MCF 10A (cell line): ENCODE measurements at regions of chr5 and their contacts with region 1.

Region 1: DNA sequence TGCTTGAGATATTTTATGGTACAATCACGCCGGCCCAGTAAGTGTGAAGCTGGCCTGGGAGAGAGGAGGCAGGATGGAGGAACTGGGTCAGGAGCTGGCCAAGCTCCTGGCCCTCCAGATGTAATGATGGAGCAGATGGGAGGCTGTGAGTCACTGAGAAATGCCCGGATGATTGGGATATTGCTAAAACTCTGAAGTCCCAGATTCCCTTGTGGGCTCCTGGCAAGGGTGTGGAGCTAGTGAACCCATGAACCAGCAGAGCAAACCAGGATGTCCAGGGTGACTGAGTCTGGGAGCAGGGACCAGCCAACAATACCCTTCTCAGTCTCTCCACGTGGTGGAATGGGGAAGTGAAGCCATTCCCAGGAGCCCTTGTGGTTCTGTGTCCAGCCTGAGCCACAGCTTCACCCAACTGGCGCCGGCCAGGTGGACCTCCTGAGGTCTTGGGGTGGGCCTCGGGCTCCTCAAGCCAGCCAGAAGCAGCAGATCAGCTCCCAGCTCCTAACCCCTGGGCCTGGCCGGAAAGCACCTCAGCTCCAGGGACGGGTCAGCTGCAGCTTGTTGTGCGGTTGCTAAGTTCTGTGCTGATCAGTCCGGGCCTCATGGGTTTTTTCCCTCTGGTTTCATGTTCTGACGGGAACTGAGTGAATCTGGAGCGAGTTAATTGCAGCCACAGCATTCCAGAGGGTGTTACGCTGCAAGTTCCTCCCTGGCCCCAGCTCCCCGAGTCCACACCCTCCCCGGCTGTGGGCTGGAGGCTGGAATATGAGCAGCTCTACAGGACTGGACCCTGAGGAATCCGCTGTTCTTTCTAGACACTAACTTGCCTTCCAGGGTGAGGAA is 37.6 kb downstream of the DUSP1 start:
- DNase-seq: peak; percentile 93
- H3K4me3 Mint-ChIP-seq: peak overlapping the region; percentile 63
- H3K27ac Mint-ChIP-seq: peak overlapping the region; percentile 99
- H3K4me1 Mint-ChIP-seq: peaks cover 44% of the 10 kb centered on the region
- H3K27me3 Mint-ChIP-seq: no peaks in the 10 kb centered on the region
- CTCF ChIP-seq: peak; percentile 18

Region 2: DNA sequence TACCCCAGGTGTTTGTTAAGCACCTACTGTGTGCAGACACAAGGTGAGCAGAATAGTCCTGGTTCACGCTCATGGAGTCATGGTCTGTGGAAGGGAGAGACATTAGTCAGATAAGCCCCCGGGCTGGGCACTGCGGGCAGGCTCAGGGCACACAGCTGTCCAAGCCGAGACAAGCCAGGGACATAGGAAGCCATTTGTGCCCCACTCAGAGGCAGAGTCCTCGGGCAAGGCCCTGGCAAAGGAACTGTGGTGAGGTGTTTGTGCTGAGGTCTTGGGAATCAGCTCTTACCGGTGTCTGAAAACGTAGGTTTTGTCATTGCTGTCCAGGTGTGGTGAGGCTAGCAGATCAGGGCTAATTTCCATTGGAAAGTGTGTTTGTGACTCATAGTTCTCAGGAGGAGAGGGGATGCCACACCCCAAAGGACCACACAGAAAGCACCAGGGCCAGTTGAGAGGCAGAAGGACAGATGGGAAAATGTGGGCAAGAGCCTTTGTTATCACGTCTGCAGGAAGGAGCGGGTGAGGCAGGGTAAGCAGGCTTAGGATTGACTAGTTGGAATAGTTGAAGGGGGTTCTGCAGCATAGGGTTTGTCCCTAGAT is 138.4 kb before region 1 on chr5:
- CTCF ChIA-PET with region 1: no interaction called
- POLR2A ChIA-PET with region 1: no interaction called
- intact Hi-C with region 1: no loop called
- DNase-seq: peak; percentile 78
- H3K4me3 Mint-ChIP-seq: no peak overlapping the region
- H3K27ac Mint-ChIP-seq: no peak overlapping the region
- H3K4me1 Mint-ChIP-seq: peaks cover 16% of the 10 kb centered on the region
- H3K27me3 Mint-ChIP-seq: peaks cover 12% of the 10 kb centered on the region
- CTCF ChIP-seq: no peak

Region 3: GRCh38 chr5:172616730-172617129 is 116.6 kb before region 1 on chr5:
- CTCF ChIA-PET with region 1: no interaction called
- POLR2A ChIA-PET with region 1: no interaction called
- intact Hi-C with region 1: no loop called
- DNase-seq: no peak
- H3K4me3 Mint-ChIP-seq: no peak overlapping the region
- H3K27ac Mint-ChIP-seq: no peak overlapping the region
- H3K4me1 Mint-ChIP-seq: peaks cover under 1% of the 10 kb centered on the region
- H3K27me3 Mint-ChIP-seq: no peaks in the 10 kb centered on the region
- CTCF ChIP-seq: no peak

Region 4: GRCh38 chr5:172658961-172659491 is 74.3 kb before region 1 on chr5:
- CTCF ChIA-PET with region 1: no interaction called
- POLR2A ChIA-PET with region 1: no interaction called
- intact Hi-C with region 1: no loop called
- DNase-seq: peak; percentile 30
- H3K4me3 Mint-ChIP-seq: no peak overlapping the region
- H3K27ac Mint-ChIP-seq: peak overlapping the region; percentile 40
- H3K4me1 Mint-ChIP-seq: peaks cover 15% of the 10 kb centered on the region
- H3K27me3 Mint-ChIP-seq: no peaks in the 10 kb centered on the region
- CTCF ChIP-seq: no peak

Region 5: DNA sequence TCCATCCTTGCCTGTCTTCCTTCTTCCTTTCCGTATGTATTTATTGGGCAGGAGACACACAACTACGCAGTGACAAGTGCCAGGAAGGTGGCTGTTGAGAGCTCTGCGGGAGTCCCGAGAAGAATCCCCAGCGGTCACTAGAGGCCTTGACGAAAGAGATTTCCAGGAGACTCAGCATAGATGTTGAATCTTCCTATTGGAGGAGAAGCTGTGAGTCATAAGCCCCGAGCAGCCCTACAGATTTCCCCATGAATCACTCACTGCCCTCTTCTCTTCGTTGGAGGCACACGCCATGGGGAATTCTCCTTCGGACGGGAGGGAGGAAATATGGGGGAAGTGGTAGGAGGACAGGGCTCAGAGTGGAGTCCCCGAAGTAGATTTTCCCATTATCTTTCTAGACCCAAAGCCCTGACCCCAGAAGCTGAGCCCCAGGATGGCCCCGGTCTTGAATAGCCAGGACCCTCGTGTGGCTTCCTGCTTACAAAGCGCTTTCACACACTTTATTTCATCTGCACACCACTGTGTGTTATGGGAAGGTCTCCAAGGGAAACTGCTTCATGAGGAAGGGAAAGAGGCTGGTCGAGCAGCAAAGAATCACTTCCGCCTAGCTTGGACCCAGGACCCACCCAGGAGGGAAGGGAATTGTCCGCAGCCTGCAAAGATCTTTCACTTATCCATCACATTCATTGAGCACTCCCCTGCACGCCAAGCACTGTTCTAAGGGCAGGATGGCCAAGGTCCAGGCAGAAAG is 24.9 kb after region 1 on chr5:
- CTCF ChIA-PET with region 1: interaction called, 8 read pairs
- POLR2A ChIA-PET with region 1: interaction called, 44 read pairs
- intact Hi-C with region 1: no loop called
- DNase-seq: peak; percentile 98
- H3K4me3 Mint-ChIP-seq: no peak overlapping the region
- H3K27ac Mint-ChIP-seq: peak overlapping the region; percentile 76
- H3K4me1 Mint-ChIP-seq: peaks cover 12% of the 10 kb centered on the region
- H3K27me3 Mint-ChIP-seq: no peaks in the 10 kb centered on the region
- CTCF ChIP-seq: no peak

Region 6: DNA sequence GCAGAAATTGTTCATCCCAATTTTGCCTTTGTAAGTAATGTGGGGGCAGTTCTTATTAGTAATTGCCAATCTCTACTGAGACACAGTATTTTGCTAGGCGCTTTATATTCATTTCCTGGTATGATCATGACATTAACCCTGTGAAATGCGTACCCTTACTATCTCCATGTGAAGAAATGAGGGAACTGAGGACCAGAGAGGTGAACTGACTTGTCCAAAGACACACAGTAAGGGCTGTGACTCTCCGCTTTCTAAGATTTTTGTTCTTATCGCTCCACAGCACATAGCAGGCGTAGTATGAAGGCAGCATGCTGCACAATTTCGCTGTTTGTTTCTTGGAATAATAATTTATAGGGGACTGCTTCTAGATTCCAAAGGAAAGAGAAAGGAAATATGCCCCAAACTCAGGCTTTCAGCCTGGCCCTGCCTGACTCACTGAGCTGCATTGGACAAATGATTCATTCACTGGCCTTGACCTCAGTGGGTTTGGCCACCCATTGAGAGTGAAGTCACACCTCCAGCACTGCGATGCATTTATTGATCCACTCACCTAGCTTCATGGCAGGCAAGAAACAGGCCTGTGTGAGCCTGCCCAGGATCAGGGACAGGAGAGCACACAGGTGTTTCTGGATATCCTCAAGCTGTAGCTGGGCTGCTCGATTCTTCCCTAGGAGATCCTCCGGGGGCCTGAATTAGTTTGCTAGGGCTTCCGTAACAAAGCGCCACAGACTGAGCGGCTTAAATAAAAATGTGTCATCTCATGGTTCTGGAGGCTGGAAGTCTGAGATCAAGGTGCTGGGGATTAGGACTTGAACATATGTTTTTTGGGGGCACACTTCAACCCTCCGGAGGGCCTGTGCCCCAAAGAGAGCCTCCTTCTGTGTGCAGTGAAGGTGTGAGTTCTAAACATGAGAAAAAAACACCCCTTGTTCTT is 44.8 kb after region 1 on chr5:
- CTCF ChIA-PET with region 1: interaction called, 26 read pairs
- POLR2A ChIA-PET with region 1: interaction called, 287 read pairs
- intact Hi-C with region 1: no loop called
- DNase-seq: peak; percentile 97
- H3K4me3 Mint-ChIP-seq: peak overlapping the region; percentile 69
- H3K27ac Mint-ChIP-seq: peak overlapping the region; percentile 99
- H3K4me1 Mint-ChIP-seq: peaks cover 70% of the 10 kb centered on the region
- H3K27me3 Mint-ChIP-seq: no peaks in the 10 kb centered on the region
- CTCF ChIP-seq: no peak

Region 7: GRCh38 chr5:172910828-172911627 is 177.7 kb after region 1 on chr5:
- CTCF ChIA-PET with region 1: interaction called, 7 read pairs
- POLR2A ChIA-PET with region 1: interaction called, 42 read pairs
- intact Hi-C with region 1: no loop called
- DNase-seq: peak; percentile 99
- H3K4me3 Mint-ChIP-seq: no peak overlapping the region
- H3K27ac Mint-ChIP-seq: peak overlapping the region; percentile 90
- H3K4me1 Mint-ChIP-seq: peaks cover 43% of the 10 kb centered on the region
- H3K27me3 Mint-ChIP-seq: no peaks in the 10 kb centered on the region
- CTCF ChIP-seq: peak; percentile 50